ENCODE measurements at regions of chr13 and their contacts with region 1.

Region 1: DNA sequence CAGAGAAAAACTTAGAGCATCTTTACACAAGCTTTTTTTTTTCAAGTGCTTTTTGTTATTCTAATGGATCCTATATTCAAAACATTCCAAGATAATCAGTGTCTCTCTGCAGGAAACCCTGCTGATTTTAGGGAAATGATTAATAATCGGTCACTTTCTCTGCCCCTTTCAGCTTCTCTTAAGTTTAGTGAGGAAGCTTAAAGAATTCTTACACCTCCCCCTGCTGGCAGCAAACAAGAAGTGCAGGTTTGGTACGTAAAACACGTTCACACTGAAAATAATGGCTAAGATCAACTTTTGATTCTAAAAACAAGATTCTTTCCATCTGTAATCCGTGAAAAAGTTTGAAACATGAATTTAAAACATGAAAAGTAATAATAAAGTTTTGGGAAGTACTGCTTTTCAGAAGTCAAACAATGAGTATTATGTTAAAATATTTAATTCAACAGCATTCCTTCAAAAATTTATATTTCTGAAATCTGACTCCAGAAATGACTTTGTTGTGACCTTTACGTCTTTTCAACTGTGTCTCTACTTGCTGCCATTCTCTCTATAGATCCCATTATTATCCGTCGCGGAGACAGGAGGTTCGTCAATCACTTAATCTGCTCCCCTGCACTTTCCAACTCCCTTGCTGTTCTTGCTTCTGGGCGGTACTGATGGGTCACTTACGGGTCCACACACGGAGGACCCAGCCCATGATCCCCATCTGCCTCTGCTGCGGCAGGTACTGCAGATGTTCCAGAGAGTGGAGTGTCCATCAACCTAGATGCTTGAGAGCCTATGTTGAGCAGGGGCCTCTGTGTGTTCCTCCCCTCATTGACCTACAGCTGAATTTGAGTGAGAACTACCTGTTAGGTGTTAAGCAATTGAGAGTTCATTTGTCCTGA is 203.1 kb upstream of the EDNRB start:
- DNase-seq: no peak

Region 2: DNA sequence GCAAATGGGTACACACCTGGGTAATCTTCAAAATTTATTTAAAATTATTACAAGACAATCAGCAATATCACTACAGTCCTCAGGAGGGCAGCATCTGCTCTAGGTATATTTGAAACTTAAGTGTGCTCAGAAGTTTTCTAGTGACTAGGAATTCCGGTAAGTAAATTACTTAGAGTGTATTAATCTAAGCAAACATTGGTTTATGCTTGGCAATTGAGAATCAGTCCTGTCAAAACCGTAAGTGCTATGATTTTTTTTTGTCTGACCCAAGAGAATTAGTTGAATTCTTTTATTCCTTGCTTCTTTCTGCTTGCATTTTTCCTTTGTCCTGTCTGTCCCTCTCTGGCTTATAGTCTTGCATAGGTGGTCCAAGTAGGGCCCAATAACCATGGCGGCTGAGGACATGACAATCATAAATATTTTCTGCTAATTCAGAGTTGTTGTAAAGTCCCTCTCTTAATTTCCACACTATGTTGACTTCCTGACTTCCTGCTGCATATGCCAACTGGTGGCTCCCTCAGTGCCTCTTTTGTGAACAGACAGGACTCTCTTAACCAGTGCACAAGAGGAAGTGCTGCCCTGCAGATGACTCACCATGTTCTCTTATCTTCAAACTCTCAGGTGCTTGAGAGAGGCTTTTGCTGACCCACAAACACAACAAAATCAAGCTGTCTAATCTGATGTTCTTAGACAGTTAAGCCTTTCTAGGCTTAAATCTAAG is 342.0 kb before region 1 on chr13:
- intact Hi-C with region 1: loop called (anchors 2 to 5 kb)
- DNase-seq: no peak

Region 3: GRCh38 chr13:77789376-77789775 is 332.3 kb before region 1 on chr13:
- intact Hi-C with region 1: loop called in 1 of 2 experiments (anchors 5 kb)
- DNase-seq: no peak

Region 4: DNA sequence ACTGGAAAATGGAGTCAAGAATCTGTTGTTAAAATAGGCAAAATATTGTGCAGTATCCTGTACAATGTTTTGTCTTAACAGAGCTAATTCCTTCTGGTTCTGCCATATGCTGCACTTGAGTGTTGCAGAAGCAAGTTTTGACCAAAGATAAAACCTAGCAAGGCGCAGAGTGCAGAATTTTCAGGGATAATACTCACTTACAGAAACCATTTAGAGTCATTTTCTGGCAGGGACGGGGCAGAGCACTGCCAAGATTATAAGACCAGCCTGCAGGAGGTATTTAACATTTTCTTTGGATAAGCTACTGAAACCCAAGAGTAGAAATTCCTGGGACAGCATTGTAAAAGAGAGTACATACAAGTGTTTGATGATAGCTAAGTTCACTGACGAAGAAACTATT is 43.5 kb before region 1 on chr13:
- intact Hi-C with region 1: no loop called
- DNase-seq: no peak

Region 5: GRCh38 chr13:78102121-78102677 is 19.5 kb before region 1 on chr13:
- intact Hi-C with region 1: no loop called
- DNase-seq: no peak

Measured in posterior vena cava (tissue), 2 donors.